ENCODE measurements at regions of chr12 and their contacts with region 1.

Region 1: DNA sequence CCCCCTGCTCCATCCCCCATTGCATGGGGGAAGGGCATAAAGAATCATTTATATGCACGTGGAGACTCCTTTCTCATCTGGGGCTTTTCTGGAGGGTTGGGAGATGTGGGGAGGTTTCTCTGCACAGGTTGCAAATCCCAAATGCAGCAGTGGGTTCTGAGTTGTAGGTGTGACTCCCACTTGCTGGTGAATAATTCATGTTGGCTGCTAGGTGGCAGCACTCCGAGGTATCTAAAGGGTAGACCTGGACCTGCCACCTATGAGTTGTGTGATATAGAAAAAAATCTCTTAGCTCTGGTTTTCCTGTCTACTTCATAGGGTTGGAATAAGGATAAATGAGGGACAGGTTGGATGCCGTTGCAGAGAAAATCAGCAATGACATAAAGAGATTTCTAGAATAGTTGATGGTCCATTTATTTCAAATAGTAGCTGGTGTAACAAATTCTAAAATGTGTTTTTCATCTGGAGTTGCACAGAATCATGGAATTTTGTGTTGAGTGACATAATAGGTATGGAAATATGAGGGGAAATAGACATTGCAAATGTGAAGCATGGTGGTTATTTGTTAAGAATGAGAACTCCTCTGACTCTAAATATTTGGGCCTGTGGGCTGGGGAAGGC is 4.6 kb downstream of the MARCHF9 start:
- DNase-seq: no peak
- H3K4me3 ChIP-seq: no peak overlapping the region
- H3K27ac ChIP-seq: no peak overlapping the region
- H3K4me1 ChIP-seq: peaks cover 4% of the 10 kb centered on the region
- H3K27me3 ChIP-seq: peaks cover 29 to 30% of the 10 kb centered on the region in 2 experiments
- CTCF ChIP-seq: peak in 1 of 2 donors; percentile 36
- POLR2A ChIP-seq: no peak

Region 2: DNA sequence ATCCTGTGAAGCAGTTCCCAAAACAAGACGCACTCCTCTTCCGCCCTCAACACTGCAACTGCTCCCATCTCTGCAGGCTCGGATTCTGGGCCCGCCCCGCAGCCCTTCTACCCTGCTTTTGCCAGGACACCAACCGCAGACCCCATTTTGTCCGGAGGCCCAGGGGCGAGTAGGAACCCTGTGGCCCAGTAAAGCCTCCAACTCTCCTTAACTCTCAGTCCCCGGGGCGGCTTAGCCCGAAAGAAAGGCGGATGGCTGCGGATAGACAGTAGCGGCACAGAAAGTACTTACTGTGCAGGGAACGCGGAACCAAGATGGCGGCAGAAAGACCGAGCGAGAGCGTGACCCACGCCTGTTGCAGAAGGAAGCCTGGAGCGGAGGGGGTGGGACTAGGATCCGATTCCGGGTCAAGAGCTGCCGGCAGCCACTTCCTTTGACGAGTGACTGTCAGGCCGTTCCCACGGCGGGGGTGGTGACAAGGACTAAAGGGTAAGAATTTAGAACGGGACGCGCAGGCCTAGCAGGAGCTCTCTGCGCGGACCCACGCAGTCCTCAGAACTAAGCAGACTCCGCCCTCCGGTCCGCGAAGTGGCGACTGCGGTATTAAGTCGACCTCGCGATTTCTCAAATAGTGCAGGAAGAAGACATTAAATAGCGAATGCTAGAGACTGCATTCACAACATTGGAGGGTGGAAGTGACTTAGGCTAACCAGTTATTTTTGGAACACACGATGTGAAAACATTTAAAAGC is 1034.3 kb before region 1 on chr12 and contains the start of gene NACA:
- CTCF ChIA-PET with region 1: no interaction called
- POLR2A ChIA-PET with region 1: no interaction called
- dilution Hi-C with region 1: no loop called
- intact Hi-C with region 1: no loop called
- DNase-seq: peak; percentile 99
- H3K4me3 ChIP-seq: peak within 1 kb of the TSS; percentile 85 to 90 (median 86)
- H3K27ac ChIP-seq: peak within 1 kb of the TSS; percentile 61
- H3K4me1 ChIP-seq: peaks cover 33% of the 10 kb centered on the region
- H3K27me3 ChIP-seq: no peaks in the 10 kb centered on the region
- CTCF ChIP-seq: no peak
- POLR2A ChIP-seq: peak; percentile 91
- total RNA-seq, gene NACA: 886 and 892 TPM in 2 replicates

Region 3: GRCh38 chr12:57744777-57745484 is 14.5 kb before region 1 on chr12 and contains the start of gene TSPAN31:
- CTCF ChIA-PET with region 1: interaction called, 12 read pairs
- POLR2A ChIA-PET with region 1: no interaction called
- dilution Hi-C with region 1: no loop called
- intact Hi-C with region 1: no loop called
- DNase-seq: peak; percentile 97
- H3K4me3 ChIP-seq: peak within 1 kb of the TSS; percentile 44 to 88 (median 75)
- H3K27ac ChIP-seq: peak within 1 kb of the TSS; percentile 68
- H3K4me1 ChIP-seq: peaks cover 10% of the 10 kb centered on the region
- H3K27me3 ChIP-seq: peaks cover 14 to 16% of the 10 kb centered on the region in 2 experiments
- CTCF ChIP-seq: no peak
- POLR2A ChIP-seq: peak; percentile 48
- total RNA-seq, gene TSPAN31: 14.6 and 15.0 TPM in 2 replicates

Region 4: GRCh38 chr12:58176296-58176869 is 416.9 kb after region 1 on chr12:
- CTCF ChIA-PET with region 1: no interaction called
- POLR2A ChIA-PET with region 1: no interaction called
- dilution Hi-C with region 1: no loop called
- intact Hi-C with region 1: no loop called
- DNase-seq: peak; percentile 14
- H3K4me3 ChIP-seq: no peak overlapping the region
- H3K27ac ChIP-seq: no peak overlapping the region
- H3K4me1 ChIP-seq: no peaks in the 10 kb centered on the region
- H3K27me3 ChIP-seq: peaks cover 0 to 4% of the 10 kb centered on the region in 2 experiments
- CTCF ChIP-seq: peak; percentile 29 to 39
- POLR2A ChIP-seq: no peak

Measured in endothelial cell of umbilical vein (primary cell).